OCI-LY7 (cell line): ENCODE measurements at regions of chr16 and their contacts with region 1.

Region 1: DNA sequence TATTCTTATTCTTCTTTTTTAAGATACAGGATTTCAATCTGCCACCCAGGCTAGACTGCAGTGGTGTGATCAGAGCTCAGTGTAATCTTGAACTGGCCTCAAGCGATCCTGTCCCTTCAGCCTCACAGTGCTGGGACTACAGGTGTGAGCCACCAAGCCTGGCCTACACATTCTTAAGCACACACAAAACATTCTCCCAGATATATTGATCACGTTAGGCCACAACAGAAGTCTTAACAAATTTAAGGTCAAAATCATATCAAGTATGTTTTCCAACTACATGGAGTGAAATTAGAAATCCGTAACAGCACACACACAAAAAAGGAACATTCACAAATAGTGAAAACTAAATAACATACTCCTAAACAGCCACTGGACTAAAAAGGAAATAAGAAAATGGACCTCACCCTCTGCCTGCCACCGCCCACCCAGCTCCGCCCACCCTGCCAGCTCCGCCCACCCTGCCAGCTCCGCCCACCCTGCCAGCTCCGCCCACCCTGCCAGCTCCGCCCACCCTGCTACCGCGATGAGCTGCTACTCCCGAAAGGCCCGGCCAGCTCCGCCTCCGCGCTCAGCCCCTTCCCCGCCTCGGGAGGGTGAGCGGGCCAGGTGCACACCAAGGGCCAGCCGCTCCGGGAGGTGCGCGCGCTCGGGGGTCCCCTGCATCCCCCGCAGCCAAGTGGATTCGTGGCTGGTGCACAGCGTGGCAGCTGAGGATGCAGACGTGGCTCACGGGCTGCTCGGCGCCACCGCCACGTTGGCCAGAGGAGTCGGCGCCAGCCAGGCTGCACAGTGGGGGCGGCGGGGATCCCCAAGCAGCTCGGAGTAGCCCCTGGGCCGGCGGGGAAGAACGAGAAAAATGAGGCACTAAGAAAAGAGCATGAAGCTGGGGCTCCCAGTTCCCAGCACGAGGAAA is 41.2 kb downstream of the C16orf87 start:
- DNase-seq: peak; percentile 89
- H3K4me3 ChIP-seq: peak overlapping the region; percentile 72
- H3K27ac ChIP-seq: peak overlapping the region; percentile 81
- H3K4me1 ChIP-seq: peaks cover 43% of the 10 kb centered on the region
- CTCF ChIP-seq: no peak

Region 2: DNA sequence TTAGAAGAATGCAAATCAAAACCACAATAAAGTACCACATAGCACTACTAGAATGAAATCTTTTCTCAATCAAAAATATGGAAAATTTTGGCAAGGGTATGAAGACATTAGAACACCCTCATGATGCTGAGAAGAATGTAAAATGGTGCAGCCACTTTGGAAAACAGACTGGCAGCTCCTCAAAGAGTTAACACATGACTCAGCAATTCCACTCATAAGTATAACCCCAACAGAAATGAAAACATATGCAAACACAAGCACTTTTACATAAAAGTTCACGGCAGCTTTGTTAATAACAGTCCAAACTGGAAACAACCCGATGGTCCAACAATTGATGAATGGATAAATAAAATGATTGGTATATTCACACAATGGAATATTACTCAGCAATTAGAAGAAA is 293.1 kb before region 1 on chr16:
- CTCF ChIA-PET with region 1: no interaction called
- POLR2A ChIA-PET with region 1: no interaction called
- intact Hi-C with region 1: no loop called
- DNase-seq: no peak
- H3K4me3 ChIP-seq: no peak overlapping the region
- H3K27ac ChIP-seq: no peak overlapping the region
- H3K4me1 ChIP-seq: no peaks in the 10 kb centered on the region
- CTCF ChIP-seq: no peak

Region 3: DNA sequence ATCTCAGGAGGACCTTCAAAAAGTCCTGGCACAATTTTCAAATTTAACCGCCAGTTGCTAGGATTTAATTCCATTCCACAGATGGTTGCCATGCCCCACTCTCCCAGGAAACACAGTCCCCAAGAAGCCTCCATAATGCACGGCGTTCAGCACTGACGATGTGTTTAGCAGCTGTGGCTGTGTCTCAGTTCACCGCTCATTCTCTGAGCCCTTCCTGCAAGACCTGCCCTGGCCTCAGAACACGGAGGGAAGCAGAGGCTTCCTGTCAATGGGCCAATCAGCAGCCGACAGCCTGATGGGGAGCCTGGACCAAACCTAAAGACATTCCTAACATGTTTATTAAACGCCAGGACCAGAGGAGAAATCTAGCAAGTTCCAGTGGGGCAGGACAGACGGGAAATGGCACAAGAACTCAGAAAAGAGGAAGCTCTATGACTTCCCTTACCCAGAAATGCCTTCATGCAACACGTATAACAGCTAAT is 46.5 kb before region 1 on chr16:
- CTCF ChIA-PET with region 1: interaction called, 4 read pairs
- POLR2A ChIA-PET with region 1: interaction called, 10 read pairs
- intact Hi-C with region 1: no loop called
- DNase-seq: peak; percentile 86
- H3K4me3 ChIP-seq: peak overlapping the region; percentile 60
- H3K27ac ChIP-seq: peak overlapping the region; percentile 60
- H3K4me1 ChIP-seq: peaks cover 25% of the 10 kb centered on the region
- CTCF ChIP-seq: no peak

Region 4: GRCh38 chr16:46777804-46778475 is 11.8 kb before region 1 on chr16:
- CTCF ChIA-PET with region 1: no interaction called
- POLR2A ChIA-PET with region 1: interaction called, 14 read pairs
- intact Hi-C with region 1: no loop called
- DNase-seq: no peak
- H3K4me3 ChIP-seq: no peak overlapping the region
- H3K27ac ChIP-seq: no peak overlapping the region
- H3K4me1 ChIP-seq: peaks cover 20% of the 10 kb centered on the region
- CTCF ChIP-seq: no peak

Region 5: DNA sequence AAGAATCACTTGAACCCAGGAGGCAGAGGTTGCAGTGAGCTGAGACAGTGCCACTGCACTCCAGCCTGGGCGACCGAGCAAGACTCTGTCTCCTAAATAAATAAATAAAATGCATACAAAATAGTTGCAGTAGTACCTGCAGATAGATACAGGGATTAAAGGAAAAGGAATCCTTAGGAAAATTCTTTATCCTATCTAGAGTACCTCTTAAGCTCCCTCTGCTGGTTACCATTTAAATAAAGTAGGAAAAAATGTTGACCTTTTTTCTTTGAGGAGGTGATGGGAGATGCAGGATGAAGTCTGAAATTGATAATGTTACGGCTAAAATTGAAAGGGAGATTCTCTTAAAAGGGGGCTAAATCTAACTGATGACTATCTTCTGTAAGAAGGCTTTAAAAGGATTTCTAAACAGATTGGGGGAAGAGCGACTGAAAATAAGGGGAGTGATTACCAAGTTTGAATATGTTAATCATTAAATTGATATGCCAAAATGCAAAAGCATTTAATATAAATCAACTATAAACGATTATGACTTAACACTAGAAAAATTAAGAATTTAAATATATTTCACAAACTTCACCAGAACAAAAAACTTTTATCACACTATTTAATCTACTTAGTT is 11.8 kb after region 1 on chr16:
- CTCF ChIA-PET with region 1: interaction called, 5 read pairs
- POLR2A ChIA-PET with region 1: interaction called, 12 read pairs
- intact Hi-C with region 1: no loop called
- DNase-seq: no peak
- H3K4me3 ChIP-seq: no peak overlapping the region
- H3K27ac ChIP-seq: no peak overlapping the region
- H3K4me1 ChIP-seq: peaks cover 7% of the 10 kb centered on the region
- CTCF ChIP-seq: peak; percentile 71

Region 6: GRCh38 chr16:46830902-46831647 is 41.3 kb after region 1 on chr16 and contains the start of gene C16orf87:
- CTCF ChIA-PET with region 1: interaction called, 6 read pairs
- POLR2A ChIA-PET with region 1: interaction called, 7 read pairs
- intact Hi-C with region 1: loop called (anchors 2 kb)
- DNase-seq: peak; percentile 96
- H3K4me3 ChIP-seq: peak within 1 kb of the TSS; percentile 90
- H3K27ac ChIP-seq: peak within 1 kb of the TSS; percentile 80
- H3K4me1 ChIP-seq: peaks cover 65% of the 10 kb centered on the region
- CTCF ChIP-seq: no peak
- total RNA-seq, gene C16orf87: 9.1 and 14.9 TPM in 2 replicates

Region 7: GRCh38 chr16:47073223-47074155 is 283.7 kb after region 1 on chr16:
- CTCF ChIA-PET with region 1: no interaction called
- POLR2A ChIA-PET with region 1: no interaction called
- intact Hi-C with region 1: no loop called
- DNase-seq: no peak
- H3K4me3 ChIP-seq: no peak overlapping the region
- H3K27ac ChIP-seq: no peak overlapping the region
- H3K4me1 ChIP-seq: no peaks in the 10 kb centered on the region
- CTCF ChIP-seq: no peak

Region 8: DNA sequence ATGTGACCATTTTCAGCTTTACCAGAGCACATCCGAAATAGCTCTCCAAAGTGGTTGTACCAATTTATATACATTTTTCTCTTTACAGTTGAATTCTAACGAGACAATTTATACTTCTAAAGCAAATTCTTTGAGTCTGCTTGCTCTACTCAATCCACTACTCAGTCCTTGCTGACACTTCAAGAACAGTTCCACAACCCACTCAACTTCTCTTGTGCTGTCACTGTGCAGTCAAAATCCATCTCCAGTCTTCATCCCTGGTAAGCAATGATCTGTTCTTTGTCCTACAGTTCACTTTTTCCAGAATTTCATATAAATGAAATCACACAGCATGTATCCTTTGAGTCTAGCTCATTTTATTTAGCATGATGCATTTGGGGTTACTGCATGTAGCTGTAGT is 323.4 kb after region 1 on chr16:
- CTCF ChIA-PET with region 1: no interaction called
- POLR2A ChIA-PET with region 1: no interaction called
- intact Hi-C with region 1: no loop called
- DNase-seq: no peak
- H3K4me3 ChIP-seq: no peak overlapping the region
- H3K27ac ChIP-seq: no peak overlapping the region
- H3K4me1 ChIP-seq: no peaks in the 10 kb centered on the region
- CTCF ChIP-seq: no peak